ENCODE measurements at regions of chr22 and their contacts with region 1.

Region 1: GRCh38 chr22:38766076-38766777 is 10.4 kb upstream of the SUN2 start:
- DNase-seq: peak; percentile 38
- H3K4me3 ChIP-seq: no peak overlapping the region
- H3K27ac ChIP-seq: no peak overlapping the region
- H3K4me1 ChIP-seq: peaks cover 3% of the 10 kb centered on the region
- H3K27me3 ChIP-seq: peaks cover 9% of the 10 kb centered on the region
- CTCF ChIP-seq: peak; percentile 74

Region 2: GRCh38 chr22:38824585-38824984 is 58.4 kb after region 1 on chr22:
- intact Hi-C with region 1: no loop called
- DNase-seq: peak; percentile 38
- H3K4me3 ChIP-seq: no peak overlapping the region
- H3K27ac ChIP-seq: no peak overlapping the region
- H3K4me1 ChIP-seq: no peaks in the 10 kb centered on the region
- H3K27me3 ChIP-seq: no peaks in the 10 kb centered on the region
- CTCF ChIP-seq: peak; percentile 54

Region 3: DNA sequence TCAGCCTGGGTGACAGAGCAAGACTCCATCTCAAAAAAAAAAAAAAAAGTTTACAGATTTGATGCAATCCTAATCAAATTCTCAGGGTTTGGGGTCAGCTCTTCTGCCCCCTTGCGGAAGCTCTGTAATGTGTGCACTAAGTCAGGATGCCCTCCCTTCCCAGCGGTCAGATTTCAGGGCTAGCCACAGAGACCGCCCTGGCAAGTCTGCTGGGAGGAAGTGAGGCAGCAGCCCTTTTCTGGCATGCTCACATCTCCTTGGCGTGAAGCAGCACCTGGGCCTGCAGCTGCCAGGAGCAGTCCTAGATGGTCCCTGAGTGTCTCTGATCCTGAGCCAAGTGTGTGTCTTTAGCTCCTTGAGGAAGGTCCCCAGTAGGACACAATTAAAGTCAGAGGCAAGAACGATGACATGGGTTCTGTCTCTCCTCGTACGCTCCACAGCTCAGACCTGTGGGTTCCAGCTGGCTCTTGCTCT is 237.0 kb after region 1 on chr22:
- intact Hi-C with region 1: loop called (anchors 10 kb)
- DNase-seq: peak; percentile 61
- H3K4me3 ChIP-seq: no peak overlapping the region
- H3K27ac ChIP-seq: no peak overlapping the region
- H3K4me1 ChIP-seq: peaks cover 3% of the 10 kb centered on the region
- H3K27me3 ChIP-seq: peaks cover 7% of the 10 kb centered on the region
- CTCF ChIP-seq: peak; percentile 83

Measured in left ventricle myocardium inferior (tissue), 1 donor.